Sigmoid colon (tissue), 7 donors: ENCODE measurements at regions of chr2 and their contacts with region 1.

Region 1: GRCh38 chr2:119283860-119284331 is 60.3 kb downstream of the STEAP3 start:
- DNase-seq: peak; percentile 85
- H3K4me3 ChIP-seq: no peak overlapping the region
- H3K27ac ChIP-seq: peak overlapping the region in 3 of 4 donors; percentile 4 to 55 (median 38)
- H3K4me1 ChIP-seq: peaks cover 0 to 25% (median 13%) of the 10 kb centered on the region in 4 donors
- H3K27me3 ChIP-seq: no peaks in the 10 kb centered on the region
- CTCF ChIP-seq: no peak
- EP300 ChIP-seq: peak in 1 of 4 donors; percentile 31
- POLR2A ChIP-seq: no peak

Region 2: DNA sequence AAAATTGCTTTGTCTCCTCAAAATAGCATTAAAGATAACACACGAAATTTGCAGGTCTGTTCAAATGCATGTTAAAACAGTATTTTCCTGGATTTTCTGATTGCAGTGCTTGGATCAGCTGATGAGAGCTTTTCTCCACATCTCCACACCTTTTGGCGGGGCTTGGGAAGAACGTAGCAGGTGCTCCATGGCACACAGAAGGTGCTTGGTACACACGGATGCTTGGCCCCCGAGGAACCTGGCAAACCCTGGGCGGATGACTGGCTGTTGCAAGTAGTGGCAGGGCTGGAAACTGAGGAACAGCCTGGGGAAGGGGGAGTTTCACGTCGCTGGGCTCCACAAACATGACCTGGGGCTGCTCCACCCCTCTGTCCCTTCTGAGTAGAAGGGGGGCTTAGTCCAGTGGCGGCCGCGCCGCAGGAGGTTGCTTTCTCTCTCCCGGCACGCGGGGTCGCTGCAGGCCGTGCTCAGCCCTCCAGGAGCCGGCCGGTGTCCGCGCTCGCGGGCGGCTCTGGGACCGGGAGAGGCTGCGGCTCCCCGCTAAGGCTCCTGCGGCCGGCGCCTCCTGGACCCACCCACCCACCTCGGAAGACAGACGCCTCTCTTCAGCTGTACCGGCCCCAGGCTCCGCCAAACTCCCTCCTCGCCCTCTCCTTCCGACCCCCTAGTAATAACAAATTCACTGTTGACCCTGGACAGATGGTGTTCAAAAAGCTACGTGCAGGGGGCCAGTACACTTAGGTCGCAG is 272.6 kb before region 1 on chr2:
- intact Hi-C with region 1: loop called (anchors 10 kb)
- DNase-seq: no peak
- H3K4me3 ChIP-seq: no peak overlapping the region
- H3K27ac ChIP-seq: no peak overlapping the region
- H3K4me1 ChIP-seq: peaks cover 0 to 7% (median 0%) of the 10 kb centered on the region in 4 donors
- H3K27me3 ChIP-seq: peaks cover 0 to 36% (median 4%) of the 10 kb centered on the region in 3 donors
- CTCF ChIP-seq: peak in 3 of 4 experiments; percentile 24 to 39 (median 25)
- EP300 ChIP-seq: no peak
- POLR2A ChIP-seq: no peak

Region 3: GRCh38 chr2:119311356-119311755 is 27.5 kb after region 1 on chr2:
- intact Hi-C with region 1: no loop called
- DNase-seq: no peak
- H3K4me3 ChIP-seq: no peak overlapping the region
- H3K27ac ChIP-seq: no peak overlapping the region
- H3K4me1 ChIP-seq: peaks cover 0 to 6% (median 0%) of the 10 kb centered on the region in 4 donors
- H3K27me3 ChIP-seq: no peaks in the 10 kb centered on the region
- CTCF ChIP-seq: no peak
- EP300 ChIP-seq: no peak
- POLR2A ChIP-seq: no peak

Region 4: GRCh38 chr2:119435081-119435952 is 151.4 kb after region 1 on chr2:
- intact Hi-C with region 1: no loop called
- DNase-seq: no peak
- H3K4me3 ChIP-seq: no peak overlapping the region
- H3K27ac ChIP-seq: no peak overlapping the region
- H3K4me1 ChIP-seq: peaks cover 0 to 20% (median 13%) of the 10 kb centered on the region in 4 donors
- H3K27me3 ChIP-seq: peaks cover 0 to 4% (median 0%) of the 10 kb centered on the region in 3 donors
- CTCF ChIP-seq: no peak
- EP300 ChIP-seq: no peak
- POLR2A ChIP-seq: no peak